Breast epithelium (tissue), 4 donors: ENCODE measurements at regions of chr10 and their contacts with region 1.

Region 1: DNA sequence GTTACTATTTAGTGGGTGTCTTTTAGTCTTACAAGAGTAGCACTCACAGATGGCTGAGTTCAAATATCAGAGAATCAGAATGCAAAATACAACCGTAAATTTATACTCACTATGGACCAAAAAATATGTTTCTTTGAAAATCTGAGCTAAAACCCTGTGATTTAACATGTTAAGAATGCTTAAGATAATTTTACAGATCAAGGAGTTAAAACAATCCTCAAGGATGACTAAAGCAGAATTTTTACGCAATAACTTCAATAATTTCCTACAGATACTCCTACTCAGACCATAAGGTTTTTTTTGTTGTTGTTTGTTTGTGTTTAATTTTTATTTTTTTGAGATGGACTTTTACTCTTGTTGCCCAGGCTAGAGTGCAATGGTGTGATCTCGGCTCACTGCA is 47.9 kb upstream of the CCDC6 start:
- DNase-seq: no peak
- H3K4me3 ChIP-seq: no peak overlapping the region
- H3K27ac ChIP-seq: no peak overlapping the region
- H3K4me1 ChIP-seq: no peaks in the 10 kb centered on the region
- H3K27me3 ChIP-seq: no peaks in the 10 kb centered on the region
- CTCF ChIP-seq: no peak
- POLR2A ChIP-seq: no peak

Region 2: GRCh38 chr10:60125895-60126294 is 171.6 kb after region 1 on chr10:
- intact Hi-C with region 1: loop called (anchors 5 kb)
- DNase-seq: no peak
- H3K4me3 ChIP-seq: no peak overlapping the region
- H3K27ac ChIP-seq: no peak overlapping the region
- H3K4me1 ChIP-seq: no peaks in the 10 kb centered on the region
- H3K27me3 ChIP-seq: no peaks in the 10 kb centered on the region
- CTCF ChIP-seq: no peak
- POLR2A ChIP-seq: no peak